ENCODE measurements at regions of chr1 and their contacts with region 1.

Region 1: GRCh38 chr1:204516180-204516879 is at the start of gene MDM4:
- DNase-seq: peak; percentile 86 to 94 (median 93)
- ATAC-seq: peak; percentile 87
- H3K4me3 ChIP-seq: peak within 1 kb of the TSS; percentile 91
- H3K4me3 Mint-ChIP-seq: peak within 1 kb of the TSS in 1 of 10 donors; percentile 87
- H3K27ac ChIP-seq: peak within 1 kb of the TSS; percentile 95
- H3K27ac Mint-ChIP-seq: peak within 1 kb of the TSS in 6 of 9 donors; percentile 68 to 98 (median 80)
- H3K4me1 ChIP-seq: peaks cover 64 to 67% of the 10 kb centered on the region in 2 donors
- H3K4me1 Mint-ChIP-seq: peaks cover 32 to 78% (median 66%) of the 10 kb centered on the region in 7 donors
- H3K27me3 ChIP-seq: no peaks in the 10 kb centered on the region
- H3K27me3 Mint-ChIP-seq: no peaks in the 10 kb centered on the region
- total RNA-seq, gene MDM4: 107 to 278 (median 268) TPM

Region 2: GRCh38 chr1:203795441-203796235 is 720.7 kb before region 1 on chr1 and contains the starts of genes ZBED6 and ZC3H11A:
- CTCF ChIA-PET with region 1: no interaction called
- POLR2A ChIA-PET with region 1: no interaction called
- intact Hi-C with region 1: loop called in 1 of 2 experiments (anchors 5 kb)
- DNase-seq: peak; percentile 85 to 100 (median 97)
- ATAC-seq: peak; percentile 99
- H3K4me3 ChIP-seq: peak within 1 kb of the TSS; percentile 80
- H3K4me3 Mint-ChIP-seq: peak within 1 kb of the TSS; percentile 94 to 98 (median 96)
- H3K27ac ChIP-seq: peak within 1 kb of the TSS; percentile 80
- H3K27ac Mint-ChIP-seq: peak within 1 kb of the TSS; percentile 82 to 98 (median 96)
- H3K4me1 ChIP-seq: peaks cover 35 to 36% of the 10 kb centered on the region in 2 donors
- H3K4me1 Mint-ChIP-seq: peaks cover 18 to 55% (median 48%) of the 10 kb centered on the region in 7 donors
- H3K27me3 ChIP-seq: no peaks in the 10 kb centered on the region
- H3K27me3 Mint-ChIP-seq: no peaks in the 10 kb centered on the region
- total RNA-seq, gene ZBED6: 23.8 to 36.1 (median 31.9) TPM
- total RNA-seq, gene ZC3H11A: 70.9 to 138 (median 91.6) TPM

Region 3: DNA sequence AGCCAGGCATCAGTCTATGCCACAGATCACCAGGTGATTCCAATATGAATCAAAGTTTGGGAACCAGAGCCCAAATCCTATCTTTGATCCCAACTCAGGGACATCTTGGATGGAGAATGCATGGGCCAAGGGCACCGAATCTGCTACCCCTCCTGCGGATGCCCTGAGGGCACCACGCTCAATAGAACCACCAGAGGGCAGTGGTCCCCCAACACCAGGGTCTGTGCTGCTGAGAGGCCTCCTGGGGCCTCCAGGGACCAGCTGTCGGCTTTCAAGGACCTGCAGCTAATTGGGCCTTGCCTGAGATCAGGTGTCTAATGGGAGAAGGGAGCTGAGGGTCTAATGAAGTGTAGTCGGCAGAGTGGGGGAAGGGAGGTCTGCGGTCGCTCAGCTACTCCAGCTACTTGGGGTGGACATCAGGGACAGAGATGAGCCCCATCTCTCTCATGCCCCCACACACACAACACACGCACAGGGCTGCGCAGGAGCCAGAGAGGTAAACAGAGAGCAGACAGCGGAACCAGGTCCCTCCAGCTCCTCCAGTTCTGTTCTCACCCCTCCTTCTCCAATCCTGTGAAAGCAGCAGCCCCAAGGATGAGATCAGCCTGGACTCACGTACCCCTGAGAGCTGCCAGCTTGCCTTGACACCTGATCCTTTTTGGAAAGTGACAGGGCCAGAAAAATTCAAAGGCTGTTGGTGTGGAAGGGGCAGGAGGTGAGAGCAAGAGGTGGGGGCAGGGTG is 69.8 kb before region 1 on chr1:
- CTCF ChIA-PET with region 1: interaction called, 11 read pairs
- POLR2A ChIA-PET with region 1: interaction called, 3 read pairs
- intact Hi-C with region 1: no loop called
- DNase-seq: peak; percentile 61 to 83 (median 75)
- ATAC-seq: peak; percentile 97
- H3K4me3 ChIP-seq: no peak overlapping the region
- H3K4me3 Mint-ChIP-seq: no peak overlapping the region
- H3K27ac ChIP-seq: peak overlapping the region; percentile 4
- H3K27ac Mint-ChIP-seq: peak overlapping the region; percentile 54 to 92 (median 73)
- H3K4me1 ChIP-seq: peaks cover 0 to 8% of the 10 kb centered on the region in 2 donors
- H3K4me1 Mint-ChIP-seq: peaks cover 3 to 32% (median 10%) of the 10 kb centered on the region in 7 donors
- H3K27me3 ChIP-seq: no peaks in the 10 kb centered on the region
- H3K27me3 Mint-ChIP-seq: no peaks in the 10 kb centered on the region

Region 4: DNA sequence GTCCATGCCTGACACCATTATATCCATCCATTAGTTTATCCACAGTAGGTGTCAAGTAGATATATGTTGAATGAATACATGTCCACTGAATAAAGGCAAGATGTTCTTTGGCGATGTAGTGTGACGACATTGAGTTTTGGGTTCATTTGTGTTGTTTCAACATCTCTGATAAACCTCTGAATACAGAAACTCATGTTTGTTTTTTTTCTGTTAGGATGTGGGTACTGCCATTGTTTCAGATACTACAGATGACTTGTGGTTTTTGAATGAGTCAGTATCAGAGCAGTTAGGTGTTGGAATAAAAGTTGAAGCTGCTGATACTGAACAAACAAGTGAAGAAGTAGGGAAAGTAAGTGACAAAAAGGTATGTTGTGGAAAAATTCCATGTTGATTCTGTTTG is 28.0 kb after region 1 on chr1:
- CTCF ChIA-PET with region 1: interaction called, 10 read pairs
- POLR2A ChIA-PET with region 1: interaction called, 31 read pairs
- intact Hi-C with region 1: loop called (anchors 1 kb)
- DNase-seq: peak in 7 of 9 donors; percentile 47 to 76 (median 67)
- ATAC-seq: peak; percentile 96
- H3K4me3 ChIP-seq: no peak overlapping the region
- H3K4me3 Mint-ChIP-seq: peak overlapping the region; percentile 0 to 77 (median 60)
- H3K27ac ChIP-seq: peak overlapping the region; percentile 63
- H3K27ac Mint-ChIP-seq: peak overlapping the region; percentile 51 to 94 (median 81)
- H3K4me1 ChIP-seq: peaks cover 30 to 39% of the 10 kb centered on the region in 2 donors
- H3K4me1 Mint-ChIP-seq: peaks cover 29 to 71% (median 65%) of the 10 kb centered on the region in 7 donors
- H3K27me3 ChIP-seq: no peaks in the 10 kb centered on the region
- H3K27me3 Mint-ChIP-seq: no peaks in the 10 kb centered on the region

Region 5: GRCh38 chr1:204763706-204764427 is 247.5 kb after region 1 on chr1:
- CTCF ChIA-PET with region 1: no interaction called
- POLR2A ChIA-PET with region 1: interaction called, 3 read pairs
- intact Hi-C with region 1: loop called in 1 of 2 experiments (anchors 5 kb)
- DNase-seq: peak; percentile 44 to 80 (median 66)
- ATAC-seq: peak; percentile 96
- H3K4me3 ChIP-seq: peak overlapping the region; percentile 27
- H3K4me3 Mint-ChIP-seq: peak overlapping the region; percentile 46 to 74 (median 60)
- H3K27ac ChIP-seq: no peak overlapping the region
- H3K27ac Mint-ChIP-seq: no peak overlapping the region
- H3K4me1 ChIP-seq: peaks cover 4 to 9% of the 10 kb centered on the region in 2 donors
- H3K4me1 Mint-ChIP-seq: peaks cover 6 to 16% (median 7%) of the 10 kb centered on the region in 7 donors
- H3K27me3 ChIP-seq: no peaks in the 10 kb centered on the region
- H3K27me3 Mint-ChIP-seq: peaks cover 3 to 41% (median 11%) of the 10 kb centered on the region in 5 donors

Region 6: DNA sequence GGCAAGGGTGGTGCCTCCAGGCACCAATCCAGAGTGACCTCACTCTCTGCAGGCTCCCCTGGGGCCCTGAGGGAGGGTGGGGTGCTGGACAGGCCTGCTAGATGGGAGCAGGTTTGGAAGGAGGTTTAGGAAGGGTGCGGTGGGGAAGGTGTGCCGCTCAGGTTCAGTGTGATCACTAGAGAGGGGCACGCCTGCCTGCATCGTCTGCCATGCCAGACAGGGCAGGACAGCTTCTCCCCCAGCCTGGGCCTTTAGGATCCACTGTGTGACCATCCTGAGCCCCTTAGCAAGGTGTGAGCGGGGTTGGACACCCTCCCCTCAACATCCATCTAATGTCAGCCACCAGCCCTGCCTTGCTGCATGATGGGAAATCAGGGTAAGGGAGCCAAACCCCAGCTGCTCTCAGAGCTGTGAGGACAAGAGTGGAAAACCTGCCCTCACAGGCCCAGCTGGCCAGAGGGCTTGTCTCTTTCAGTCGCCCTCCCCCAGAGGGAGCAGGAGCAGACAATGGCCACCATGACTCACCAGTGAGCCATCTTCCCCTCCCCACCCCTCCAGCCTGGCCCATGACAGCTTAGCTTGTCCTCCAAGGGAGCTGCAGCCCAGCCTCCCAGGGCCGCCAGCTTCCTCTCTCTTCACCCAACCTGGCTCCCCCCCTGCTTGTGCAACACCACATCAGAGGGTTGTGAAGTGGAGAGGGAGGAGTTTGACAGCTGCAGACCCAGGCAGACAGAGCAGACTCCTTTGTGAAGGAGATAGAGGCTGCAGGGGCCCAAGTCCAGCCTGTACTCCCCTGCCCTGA is 768.2 kb after region 1 on chr1:
- CTCF ChIA-PET with region 1: no interaction called
- POLR2A ChIA-PET with region 1: no interaction called
- intact Hi-C with region 1: loop called in 1 of 2 experiments (anchors 5 kb)
- DNase-seq: peak; percentile 65 to 92 (median 89)
- ATAC-seq: peak; percentile 79
- H3K4me3 ChIP-seq: peak overlapping the region; percentile 51
- H3K4me3 Mint-ChIP-seq: peak overlapping the region; percentile 63 to 89 (median 80)
- H3K27ac ChIP-seq: peak overlapping the region; percentile 83
- H3K27ac Mint-ChIP-seq: peak overlapping the region; percentile 90 to 99 (median 97)
- H3K4me1 ChIP-seq: peaks cover 61 to 78% of the 10 kb centered on the region in 2 donors
- H3K4me1 Mint-ChIP-seq: peaks cover 67 to 95% (median 80%) of the 10 kb centered on the region in 7 donors
- H3K27me3 ChIP-seq: no peaks in the 10 kb centered on the region
- H3K27me3 Mint-ChIP-seq: peaks cover 0 to 20% (median 0%) of the 10 kb centered on the region in 5 donors